BJ (cell line): ENCODE measurements at regions of chr1 and their contacts with region 1.

Region 1: DNA sequence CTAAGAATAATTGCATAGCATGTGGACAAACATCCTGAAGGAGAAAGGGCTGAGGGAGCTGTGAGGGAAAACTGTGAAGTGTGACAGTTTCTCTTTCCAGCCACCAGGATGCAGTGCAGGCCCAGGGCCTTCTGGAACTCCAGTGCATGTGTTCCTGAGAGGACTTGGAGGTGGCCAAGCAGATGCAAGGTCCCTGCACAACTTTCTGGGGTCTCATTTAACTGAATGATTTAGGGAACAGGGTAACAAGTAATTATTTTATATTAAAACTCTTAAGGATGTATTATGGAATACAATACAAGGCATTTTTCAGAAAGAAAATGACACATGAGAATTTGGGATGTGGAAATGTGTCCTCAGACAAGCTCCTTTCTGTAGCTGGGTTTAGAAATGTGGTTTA is 61.2 kb upstream of the MCOLN3 start:
- DNase-seq: peak; percentile 15
- H3K4me3 ChIP-seq: no peak overlapping the region
- H3K27me3 ChIP-seq: no peaks in the 10 kb centered on the region
- CTCF ChIP-seq: peak; percentile 96

Region 2: GRCh38 chr1:84973498-84974334 is 135.8 kb before region 1 on chr1:
- CTCF ChIA-PET with region 1: no interaction called
- POLR2A ChIA-PET with region 1: no interaction called
- DNase-seq: no peak
- H3K4me3 ChIP-seq: no peak overlapping the region
- H3K27me3 ChIP-seq: no peaks in the 10 kb centered on the region
- CTCF ChIP-seq: no peak

Region 3: GRCh38 chr1:85091671-85092280 is 17.7 kb before region 1 on chr1:
- CTCF ChIA-PET with region 1: interaction called, 17 read pairs
- POLR2A ChIA-PET with region 1: no interaction called
- DNase-seq: no peak
- H3K4me3 ChIP-seq: no peak overlapping the region
- H3K27me3 ChIP-seq: no peaks in the 10 kb centered on the region
- CTCF ChIP-seq: no peak

Region 4: DNA sequence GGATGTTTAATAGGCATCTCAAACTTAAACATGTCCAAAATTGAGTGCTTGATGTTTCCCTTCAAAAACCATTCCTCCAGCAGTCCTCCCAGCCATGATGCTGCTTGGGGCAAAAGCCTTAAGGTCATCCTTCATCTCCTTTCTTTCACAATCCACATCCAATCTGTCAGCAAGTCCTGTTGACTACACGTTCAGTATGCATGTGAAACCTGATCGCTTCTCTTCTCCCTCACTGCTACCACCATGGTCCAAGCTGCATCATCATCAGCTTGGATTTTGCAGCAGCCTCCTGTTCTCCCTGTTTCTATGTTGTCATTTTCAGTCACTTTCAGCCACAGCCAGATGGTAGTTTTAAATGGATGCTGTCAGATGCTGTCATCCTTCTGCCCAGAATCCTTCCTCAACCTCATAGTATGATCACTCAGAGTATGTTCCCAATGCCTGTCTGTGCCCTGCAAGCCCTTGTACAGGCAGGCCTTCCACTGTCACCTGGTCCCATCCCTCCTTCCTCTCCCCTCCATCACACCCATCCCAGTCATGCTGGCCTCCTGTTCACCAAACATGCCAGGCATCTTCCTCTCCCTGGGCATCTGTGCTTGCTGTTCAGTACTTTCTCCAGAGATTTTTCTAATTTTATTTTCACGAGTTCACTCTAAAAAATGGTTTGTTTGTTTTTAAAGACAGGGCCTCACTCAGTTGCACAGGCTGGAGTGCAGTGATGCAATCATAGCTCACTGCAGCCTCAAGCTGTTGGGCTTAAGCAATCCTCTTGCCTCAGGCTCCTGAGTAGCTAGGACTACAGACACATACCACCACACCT is 25.3 kb after region 1 on chr1:
- CTCF ChIA-PET with region 1: interaction called, 13 read pairs
- POLR2A ChIA-PET with region 1: no interaction called
- DNase-seq: peak; percentile 46
- H3K4me3 ChIP-seq: no peak overlapping the region
- H3K27me3 ChIP-seq: no peaks in the 10 kb centered on the region
- CTCF ChIP-seq: no peak

Region 5: GRCh38 chr1:85200870-85201339 is 91.4 kb after region 1 on chr1 and contains the start of gene SYDE2:
- CTCF ChIA-PET with region 1: interaction called, 15 read pairs
- POLR2A ChIA-PET with region 1: no interaction called
- DNase-seq: no peak
- H3K4me3 ChIP-seq: peak within 1 kb of the TSS; percentile 64
- H3K27me3 ChIP-seq: no peaks in the 10 kb centered on the region
- CTCF ChIP-seq: no peak
- polyA plus RNA-seq, gene SYDE2: 4.4 and 6.1 TPM in 2 replicates

Region 6: DNA sequence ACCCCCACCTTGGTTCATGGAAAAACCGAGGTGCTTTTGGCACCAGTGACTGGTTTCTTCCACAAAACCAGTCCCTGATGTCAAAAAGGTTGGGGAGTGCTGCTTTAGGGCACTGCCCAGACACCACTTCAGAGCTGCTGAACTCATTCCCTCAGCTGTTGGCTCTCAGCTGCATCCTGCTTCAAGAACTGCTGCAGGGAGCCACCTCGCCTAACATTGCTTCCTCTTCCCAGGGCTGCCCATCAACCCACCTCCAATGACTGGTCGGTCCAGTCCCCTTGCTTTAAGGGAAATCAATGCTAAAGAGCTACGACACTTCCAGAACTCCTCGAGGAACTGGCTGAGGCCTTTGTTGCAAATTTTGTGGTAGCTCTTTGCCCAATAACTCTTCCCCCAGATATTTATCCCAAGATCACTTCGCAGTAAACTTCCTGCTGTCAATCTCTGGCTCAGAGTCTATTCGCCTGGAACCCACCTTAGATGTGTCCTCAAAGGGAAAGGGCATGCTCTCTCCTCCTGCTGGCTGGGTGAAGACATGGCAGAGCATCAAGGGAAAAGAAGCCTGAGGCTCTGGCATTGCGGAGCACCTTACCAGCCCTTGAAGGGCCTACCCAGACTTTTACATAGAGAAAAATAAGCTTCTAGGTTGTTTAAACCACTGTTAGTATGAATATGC is 121.0 kb after region 1 on chr1:
- CTCF ChIA-PET with region 1: interaction called, 16 read pairs
- POLR2A ChIA-PET with region 1: no interaction called
- DNase-seq: no peak
- H3K4me3 ChIP-seq: no peak overlapping the region
- H3K27me3 ChIP-seq: no peaks in the 10 kb centered on the region
- CTCF ChIP-seq: peak; percentile 21; the same call in 1 of the 2 replicates

Region 7: DNA sequence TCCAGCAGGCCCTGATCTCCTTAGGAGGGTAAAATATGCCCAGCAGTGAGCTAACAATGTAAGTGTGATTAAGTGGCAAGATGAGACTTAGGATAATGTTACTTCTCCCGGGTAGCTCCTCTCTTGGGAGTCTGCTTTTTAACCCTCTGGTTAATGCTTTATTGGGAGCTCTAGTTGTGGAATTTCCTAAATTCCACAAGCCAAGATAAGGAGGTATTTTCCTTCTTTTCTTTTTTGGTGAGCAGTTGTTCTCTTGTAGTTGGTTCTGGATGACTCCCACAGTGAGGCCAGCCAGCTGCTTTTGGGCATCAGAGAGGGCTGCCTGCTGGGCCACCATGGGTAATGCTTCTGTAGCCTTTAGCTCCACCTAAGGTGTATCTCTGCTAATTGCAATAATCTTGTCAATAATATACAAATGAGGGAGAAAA is 130.7 kb after region 1 on chr1:
- CTCF ChIA-PET with region 1: interaction called, 24 read pairs
- POLR2A ChIA-PET with region 1: no interaction called
- DNase-seq: no peak
- H3K4me3 ChIP-seq: no peak overlapping the region
- H3K27me3 ChIP-seq: no peaks in the 10 kb centered on the region
- CTCF ChIP-seq: no peak

Region 8: GRCh38 chr1:85259118-85259911 is 149.8 kb after region 1 on chr1 and contains the start of gene C1orf52:
- CTCF ChIA-PET with region 1: interaction called, 271 read pairs
- POLR2A ChIA-PET with region 1: interaction called, 3 read pairs
- DNase-seq: peak; percentile 44
- H3K4me3 ChIP-seq: peak within 1 kb of the TSS; percentile 100
- H3K27me3 ChIP-seq: no peaks in the 10 kb centered on the region
- CTCF ChIP-seq: peak; percentile 98
- polyA plus RNA-seq, gene C1orf52: 29.6 and 30.5 TPM in 2 replicates